T-cell (primary cell): ENCODE measurements at regions of chr3 and their contacts with region 1.

Region 1: DNA sequence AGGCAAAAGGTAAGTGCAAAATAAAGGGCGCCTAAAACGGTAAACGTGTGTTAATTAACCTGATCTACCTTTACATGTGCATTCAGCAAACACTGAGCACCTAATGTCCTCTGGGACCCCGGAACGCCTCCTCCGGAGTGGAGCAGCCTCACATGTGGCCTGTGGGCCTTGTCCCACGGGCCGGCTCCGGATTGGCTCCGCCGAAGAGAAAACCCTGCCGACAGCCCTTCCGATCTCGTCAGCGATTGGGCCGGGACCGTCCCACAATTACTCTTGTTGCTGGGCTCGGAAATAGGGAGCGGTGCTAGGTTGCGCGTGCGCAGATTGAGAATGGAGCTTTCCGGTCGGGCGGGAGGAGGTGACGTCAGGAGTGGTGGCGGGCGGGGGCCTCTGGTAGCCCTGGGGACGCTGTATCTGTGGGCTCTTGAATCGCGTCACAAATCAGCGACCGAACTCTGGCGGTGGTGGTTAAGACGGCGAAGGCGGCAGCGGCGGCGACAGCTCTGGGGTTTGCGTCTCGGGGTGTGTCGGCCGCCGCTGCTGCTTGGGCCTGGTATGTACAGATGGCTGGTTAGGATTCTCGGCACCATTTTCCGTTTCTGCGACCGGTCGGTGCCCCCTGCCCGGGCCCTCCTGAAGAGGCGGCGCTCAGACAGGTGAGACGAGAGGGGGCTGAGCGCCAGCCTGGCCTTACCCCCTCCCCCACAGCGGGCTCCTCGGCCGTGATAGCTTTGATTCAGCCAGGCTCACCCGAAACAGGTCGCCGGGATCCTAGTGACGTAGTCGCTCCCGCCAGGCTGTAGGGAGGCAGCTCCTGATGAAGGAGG is at the start of gene SENP2:
- DNase-seq: peak; percentile 96 to 100 (median 100)
- ATAC-seq: peak; percentile 93 to 97 (median 94)
- H3K4me3 ChIP-seq: peak within 1 kb of the TSS; percentile 72 to 92
- H3K4me3 Mint-ChIP-seq: peak within 1 kb of the TSS; percentile 87 to 92 (median 90)
- H3K27ac ChIP-seq: peak within 1 kb of the TSS; percentile 95
- H3K27ac Mint-ChIP-seq: peak within 1 kb of the TSS; percentile 95 to 96
- H3K4me1 ChIP-seq: peaks cover 10 to 47% of the 10 kb centered on the region in 2 experiments
- H3K4me1 Mint-ChIP-seq: peaks cover 22 to 41% (median 31%) of the 10 kb centered on the region in 3 donors
- H3K27me3 ChIP-seq: no peaks in the 10 kb centered on the region
- H3K27me3 Mint-ChIP-seq: no peaks in the 10 kb centered on the region
- total RNA-seq, gene SENP2: 33.1 to 56.1 (median 41.9) TPM

Region 2: GRCh38 chr3:185282696-185283394 is 303.2 kb before region 1 on chr3:
- CTCF ChIA-PET with region 1: interaction called in 1 of 2 experiments, 10 read pairs
- POLR2A ChIA-PET with region 1: no interaction called
- DNase-seq: peak; percentile 76 to 98 (median 92)
- ATAC-seq: peak; percentile 98 to 99 (median 99)
- H3K4me3 ChIP-seq: peak overlapping the region; percentile 83 to 94
- H3K4me3 Mint-ChIP-seq: peak overlapping the region; percentile 83 to 94 (median 92)
- H3K27ac ChIP-seq: peak overlapping the region; percentile 69
- H3K27ac Mint-ChIP-seq: peak overlapping the region; percentile 82 to 91
- H3K4me1 ChIP-seq: peaks cover 2 to 16% of the 10 kb centered on the region in 2 experiments
- H3K4me1 Mint-ChIP-seq: peaks cover 16 to 22% (median 20%) of the 10 kb centered on the region in 3 donors
- H3K27me3 ChIP-seq: peaks cover 0 to 8% of the 10 kb centered on the region in 2 experiments
- H3K27me3 Mint-ChIP-seq: peaks cover 24 to 26% of the 10 kb centered on the region in 2 donors

Region 3: GRCh38 chr3:185341616-185342457 is 244.2 kb before region 1 on chr3:
- CTCF ChIA-PET with region 1: no interaction called
- POLR2A ChIA-PET with region 1: no interaction called
- DNase-seq: no peak
- ATAC-seq: no peak
- H3K4me3 ChIP-seq: no peak overlapping the region
- H3K4me3 Mint-ChIP-seq: no peak overlapping the region
- H3K27ac ChIP-seq: no peak overlapping the region
- H3K27ac Mint-ChIP-seq: no peak overlapping the region
- H3K4me1 ChIP-seq: peaks cover 0 to 4% of the 10 kb centered on the region in 2 experiments
- H3K4me1 Mint-ChIP-seq: peaks cover 0 to 9% (median 7%) of the 10 kb centered on the region in 3 donors
- H3K27me3 ChIP-seq: no peaks in the 10 kb centered on the region
- H3K27me3 Mint-ChIP-seq: peaks cover 0 to 4% of the 10 kb centered on the region in 2 donors

Region 4: DNA sequence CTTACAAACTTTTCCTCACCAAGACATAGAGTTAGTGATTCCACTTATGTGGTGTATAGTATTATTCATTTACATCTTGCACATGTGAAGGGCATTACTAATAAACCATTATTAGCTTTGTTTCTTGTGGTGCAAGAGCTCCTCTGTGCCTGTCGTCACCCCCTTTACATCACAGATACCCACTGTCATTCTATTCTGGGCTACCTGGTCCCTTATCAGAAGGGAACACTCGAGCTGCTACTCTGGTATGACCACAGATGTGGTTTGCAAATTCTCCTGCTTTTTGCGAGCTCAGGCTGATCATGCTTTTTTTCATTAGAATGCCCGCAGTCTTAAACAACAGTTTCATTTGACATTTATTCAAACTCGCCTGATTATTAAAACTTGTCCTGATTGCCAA is 13.9 kb before region 1 on chr3:
- CTCF ChIA-PET with region 1: interaction called, 3 to 14 read pairs
- POLR2A ChIA-PET with region 1: interaction called, 3 read pairs
- DNase-seq: no peak
- ATAC-seq: no peak
- H3K4me3 ChIP-seq: no peak overlapping the region
- H3K4me3 Mint-ChIP-seq: no peak overlapping the region
- H3K27ac ChIP-seq: no peak overlapping the region
- H3K27ac Mint-ChIP-seq: no peak overlapping the region
- H3K4me1 ChIP-seq: peaks cover 0 to 5% of the 10 kb centered on the region in 2 experiments
- H3K4me1 Mint-ChIP-seq: peaks cover 0 to 6% (median 4%) of the 10 kb centered on the region in 3 donors
- H3K27me3 ChIP-seq: no peaks in the 10 kb centered on the region
- H3K27me3 Mint-ChIP-seq: no peaks in the 10 kb centered on the region